ENCODE measurements at regions of chr16 and their contacts with region 1.

Region 1: GRCh38 chr16:69861292-69862030 is 89.7 kb upstream of the CLEC18A start:
- DNase-seq: peak; percentile 74 to 81
- H3K4me3 ChIP-seq: peak overlapping the region; percentile 10 to 21
- H3K27ac ChIP-seq: peak overlapping the region; percentile 81 to 84
- H3K4me1 ChIP-seq: peaks cover 0 to 51% (median 28%) of the 10 kb centered on the region in 4 donors
- H3K27me3 ChIP-seq: no peaks in the 10 kb centered on the region
- CTCF ChIP-seq: no peak

Region 2: DNA sequence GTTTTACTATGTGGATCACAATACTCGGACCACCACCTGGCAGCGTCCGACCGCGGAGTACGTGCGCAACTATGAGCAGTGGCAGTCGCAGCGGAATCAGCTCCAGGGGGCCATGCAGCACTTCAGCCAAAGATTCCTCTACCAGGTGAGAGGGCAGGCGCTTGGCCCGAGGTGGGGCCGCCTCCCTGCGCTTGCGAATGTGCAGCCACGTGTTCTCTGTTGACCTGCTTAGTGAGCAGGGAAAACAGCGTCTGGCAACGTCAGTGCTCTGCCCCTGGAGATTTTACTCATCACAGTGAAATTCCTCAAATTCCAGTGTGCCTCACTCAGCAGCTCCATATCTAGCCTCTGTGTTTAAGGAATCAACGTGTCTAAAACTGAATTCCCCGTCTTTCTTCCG is 56.3 kb after region 1 on chr16:
- intact Hi-C with region 1: loop called (anchors 5 kb)
- DNase-seq: peak; percentile 82 to 90
- H3K4me3 ChIP-seq: peak overlapping the region; percentile 17 to 27
- H3K27ac ChIP-seq: peak overlapping the region; percentile 96 to 97
- H3K4me1 ChIP-seq: peaks cover 0 to 72% (median 51%) of the 10 kb centered on the region in 4 donors
- H3K27me3 ChIP-seq: no peaks in the 10 kb centered on the region
- CTCF ChIP-seq: no peak